Activated T-helper 2 cell treated with anti-CD3 and anti-CD28 coated beads, Interferon-gamma antibody, Interleukin-2, Interleukin-4, amounts not matched to agents 10 μg/mL and 5 μg/mL and 100 μg/mL, durations not matched to agents 14 hours and 24 hours and 36 hours (primary cell): ENCODE measurements at regions of chr10 and their contacts with region 1.

Region 1: GRCh38 chr10:128069351-128070051 is 56.7 kb downstream of the MKI67 start:
- DNase-seq: peak; percentile 63
- H3K4me3 Mint-ChIP-seq: no peak overlapping the region
- H3K27ac Mint-ChIP-seq: no peak overlapping the region
- H3K4me1 Mint-ChIP-seq: peaks cover 44% of the 10 kb centered on the region
- H3K27me3 Mint-ChIP-seq: no peaks in the 10 kb centered on the region

Region 2: GRCh38 chr10:127860592-127860991 is 208.9 kb before region 1 on chr10:
- intact Hi-C with region 1: no loop called
- DNase-seq: no peak
- H3K4me3 Mint-ChIP-seq: no peak overlapping the region
- H3K27ac Mint-ChIP-seq: no peak overlapping the region
- H3K4me1 Mint-ChIP-seq: no peaks in the 10 kb centered on the region
- H3K27me3 Mint-ChIP-seq: no peaks in the 10 kb centered on the region

Region 3: GRCh38 chr10:127872871-127873600 is 196.5 kb before region 1 on chr10:
- intact Hi-C with region 1: loop called (anchors 1 kb)
- DNase-seq: no peak
- H3K4me3 Mint-ChIP-seq: no peak overlapping the region
- H3K27ac Mint-ChIP-seq: no peak overlapping the region
- H3K4me1 Mint-ChIP-seq: peaks cover 10% of the 10 kb centered on the region
- H3K27me3 Mint-ChIP-seq: peaks cover 13% of the 10 kb centered on the region

Region 4: GRCh38 chr10:127906548-127907377 is 162.7 kb before region 1 on chr10 and contains the start of gene PTPRE:
- intact Hi-C with region 1: loop called (anchors 1 kb)
- DNase-seq: peak; percentile 48
- H3K4me3 Mint-ChIP-seq: no peak within 1 kb of the TSS
- H3K27ac Mint-ChIP-seq: no peak within 1 kb of the TSS
- H3K4me1 Mint-ChIP-seq: no peaks in the 10 kb centered on the region
- H3K27me3 Mint-ChIP-seq: peaks cover 40% of the 10 kb centered on the region
- total RNA-seq, gene PTPRE: 16.8 and 17.0 TPM in 2 replicates

Region 5: GRCh38 chr10:128011175-128011979 is 58.1 kb before region 1 on chr10:
- intact Hi-C with region 1: loop called (anchors 1 kb)
- DNase-seq: peak; percentile 77
- H3K4me3 Mint-ChIP-seq: peak overlapping the region; percentile 17
- H3K27ac Mint-ChIP-seq: no peak overlapping the region
- H3K4me1 Mint-ChIP-seq: peaks cover 8% of the 10 kb centered on the region
- H3K27me3 Mint-ChIP-seq: peaks cover 7% of the 10 kb centered on the region

Region 6: GRCh38 chr10:128035557-128035973 is 33.9 kb before region 1 on chr10:
- intact Hi-C with region 1: loop called (anchors 1 kb)
- DNase-seq: peak; percentile 37
- H3K4me3 Mint-ChIP-seq: no peak overlapping the region
- H3K27ac Mint-ChIP-seq: no peak overlapping the region
- H3K4me1 Mint-ChIP-seq: peaks cover 4% of the 10 kb centered on the region
- H3K27me3 Mint-ChIP-seq: peaks cover 2% of the 10 kb centered on the region

Region 7: GRCh38 chr10:128047351-128047750 is 22.1 kb before region 1 on chr10:
- intact Hi-C with region 1: loop called (anchors 1 kb)
- DNase-seq: peak; percentile 83
- H3K4me3 Mint-ChIP-seq: peak overlapping the region; percentile 82
- H3K27ac Mint-ChIP-seq: peak overlapping the region; percentile 88
- H3K4me1 Mint-ChIP-seq: peaks cover 43% of the 10 kb centered on the region
- H3K27me3 Mint-ChIP-seq: no peaks in the 10 kb centered on the region